Upper lobe of right lung (tissue), 1 donor: ENCODE measurements at regions of chr9 and their contacts with region 1.

Region 1: DNA sequence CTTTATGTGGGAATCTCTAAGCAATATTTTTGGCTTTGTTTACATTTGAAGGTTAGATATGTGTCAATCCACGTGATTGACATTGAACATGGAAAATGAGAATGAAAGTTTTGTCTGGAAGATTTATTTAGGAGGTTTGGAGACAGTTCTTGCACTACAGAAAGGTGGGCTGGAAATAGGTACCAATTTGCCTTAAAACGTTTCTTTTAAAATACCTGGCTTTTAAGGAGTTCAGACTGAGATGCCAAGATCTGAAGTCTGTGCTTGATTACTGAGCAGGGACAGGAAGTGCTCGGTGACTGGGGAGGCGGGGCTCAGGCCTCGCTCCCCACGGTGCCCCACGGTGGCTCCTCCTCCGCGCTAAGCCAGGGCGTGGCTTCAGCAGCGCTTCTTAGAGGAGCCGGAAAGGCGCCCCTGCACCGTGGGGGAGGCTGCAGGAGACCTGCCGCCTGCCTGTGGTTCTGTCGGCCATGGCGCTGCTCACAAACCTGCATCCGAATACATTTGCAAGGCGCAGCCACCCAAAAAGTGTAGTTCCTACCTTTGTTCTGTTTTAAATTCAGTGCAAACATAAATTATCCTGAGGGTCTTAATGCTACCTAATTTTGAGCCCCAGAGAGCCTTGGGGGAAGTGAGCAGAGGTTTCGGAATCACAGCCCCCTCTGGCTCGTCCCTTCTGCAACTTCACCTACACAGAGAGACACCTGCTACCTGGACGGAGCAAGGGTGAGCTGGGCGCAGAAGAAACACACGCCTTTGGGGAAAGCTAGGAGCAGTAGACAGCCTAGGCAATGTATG is 49.2 kb downstream of the USP20 start:
- DNase-seq: peak; percentile 97
- ATAC-seq: peak; percentile 88
- H3K4me3 ChIP-seq: peak overlapping the region; percentile 48
- H3K27ac ChIP-seq: peak overlapping the region; percentile 88
- H3K4me1 ChIP-seq: peaks cover 36% of the 10 kb centered on the region
- H3K27me3 ChIP-seq: no peaks in the 10 kb centered on the region
- CTCF ChIP-seq: no peak

Region 2: DNA sequence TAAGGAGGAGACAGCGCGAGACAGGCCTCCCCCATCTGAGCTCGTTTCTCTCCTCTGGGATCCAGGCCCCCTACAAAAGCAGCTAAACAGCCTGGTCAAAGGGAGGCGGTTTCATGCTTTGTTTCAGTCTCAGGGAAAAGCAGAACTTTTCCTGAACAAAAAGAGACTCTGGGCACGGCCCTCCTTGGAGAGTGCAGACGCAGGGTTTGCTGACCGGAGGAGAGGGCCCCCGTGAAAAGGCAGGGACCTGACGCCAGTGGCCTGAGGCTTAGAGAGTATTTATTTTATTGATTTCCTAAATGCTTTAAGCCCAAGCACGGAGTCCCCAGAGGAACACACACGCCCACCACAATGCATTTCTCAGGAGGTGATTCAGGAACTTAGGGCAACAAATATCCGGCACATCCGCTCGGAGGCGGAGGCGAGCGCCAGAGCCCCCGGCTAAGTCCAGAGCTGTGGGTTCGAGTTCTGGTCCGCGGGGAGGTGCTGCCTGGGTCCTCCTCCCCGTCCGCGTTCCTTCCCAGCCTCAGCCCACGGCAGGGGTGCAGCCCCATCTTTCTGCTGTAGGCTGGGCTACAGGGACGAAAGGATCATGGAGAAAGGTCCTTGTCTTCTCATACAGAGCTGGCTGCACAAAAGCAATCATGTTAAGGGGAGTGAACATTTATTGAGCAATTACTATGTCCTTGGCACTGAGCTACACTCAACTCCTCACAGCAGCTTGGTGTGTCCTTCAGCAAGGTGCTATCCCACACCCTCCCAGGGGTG is 171.6 kb before region 1 on chr9:
- intact Hi-C with region 1: no loop called
- DNase-seq: no peak
- ATAC-seq: peak; percentile 29
- H3K4me3 ChIP-seq: no peak overlapping the region
- H3K27ac ChIP-seq: peak overlapping the region; percentile 11
- H3K4me1 ChIP-seq: peaks cover 14% of the 10 kb centered on the region
- H3K27me3 ChIP-seq: peaks cover 4% of the 10 kb centered on the region
- CTCF ChIP-seq: no peak

Region 3: GRCh38 chr9:129737479-129738274 is 146.7 kb before region 1 on chr9:
- intact Hi-C with region 1: no loop called
- DNase-seq: peak; percentile 92
- ATAC-seq: peak; percentile 97
- H3K4me3 ChIP-seq: peak overlapping the region; percentile 61
- H3K27ac ChIP-seq: peak overlapping the region; percentile 79
- H3K4me1 ChIP-seq: peaks cover 4% of the 10 kb centered on the region
- H3K27me3 ChIP-seq: peaks cover 8% of the 10 kb centered on the region
- CTCF ChIP-seq: peak; percentile 99

Region 4: DNA sequence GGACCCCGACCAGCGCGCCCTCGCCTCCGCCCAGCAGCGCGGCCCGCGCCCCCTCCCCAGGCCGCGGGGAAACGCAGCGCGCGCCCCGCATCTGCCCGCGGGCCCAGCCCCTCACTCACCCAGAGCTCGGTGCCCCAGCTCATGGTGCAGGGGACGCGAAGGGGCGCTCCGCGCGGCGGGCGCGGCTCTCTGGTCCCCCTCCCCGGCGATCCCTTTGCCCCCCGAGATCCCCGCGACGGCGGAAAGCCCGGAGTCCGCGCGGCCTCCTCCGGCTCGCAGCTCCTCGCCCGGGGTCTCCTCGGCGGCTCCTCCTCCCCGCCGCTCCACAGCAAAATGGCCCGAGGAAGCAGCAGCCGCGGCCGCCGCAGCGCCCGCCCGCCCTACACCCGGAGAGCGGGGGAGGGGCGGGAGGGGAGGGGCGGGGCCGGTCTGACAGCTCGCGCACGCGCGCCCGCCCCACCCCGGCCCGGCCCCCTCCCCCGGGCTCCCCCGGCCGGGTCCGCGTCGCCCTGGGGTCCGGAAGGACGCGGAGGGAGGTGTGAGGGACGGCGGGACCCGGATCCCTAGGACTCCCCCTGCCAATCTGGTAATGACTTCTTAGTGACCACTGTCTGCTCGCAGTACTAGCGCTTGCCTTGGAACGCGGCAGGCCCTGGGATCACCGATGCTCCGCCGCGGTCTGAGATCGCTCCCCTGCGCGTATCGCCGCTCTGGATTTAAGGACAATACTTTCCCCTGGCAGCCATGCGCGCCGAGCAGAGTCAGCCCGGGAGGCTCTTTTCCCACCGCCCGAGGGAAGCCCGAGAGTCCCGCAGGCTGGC is 158.6 kb after region 1 on chr9 and contains the start of gene FNBP1:
- intact Hi-C with region 1: loop called (anchors 10 kb)
- DNase-seq: peak; percentile 91
- ATAC-seq: peak; percentile 95
- H3K4me3 ChIP-seq: peak within 1 kb of the TSS; percentile 81
- H3K27ac ChIP-seq: peak within 1 kb of the TSS; percentile 89
- H3K4me1 ChIP-seq: peaks cover 41% of the 10 kb centered on the region
- H3K27me3 ChIP-seq: no peaks in the 10 kb centered on the region
- CTCF ChIP-seq: no peak
- total RNA-seq, gene FNBP1: 50.0 TPM